ENCODE measurements at regions of chr19 and their contacts with region 1.

Region 1: GRCh38 chr19:49272184-49272583 is 52.8 kb downstream of the SLC6A16 start:
- DNase-seq: no peak
- ATAC-seq: no peak
- H3K4me3 ChIP-seq: no peak overlapping the region
- H3K27ac ChIP-seq: no peak overlapping the region
- H3K4me1 ChIP-seq: no peaks in the 10 kb centered on the region; a peak in 2 of 5 replicates
- H3K27me3 ChIP-seq: peaks cover 0 to 11% of the 10 kb centered on the region in 2 experiments; a peak in 2 of 5 replicates
- CTCF ChIP-seq: no peak
- EP300 ChIP-seq: no peak
- POLR2A ChIP-seq: no peak
- RAD21 ChIP-seq: no peak

Region 2: GRCh38 chr19:49301165-49301865 is 29.1 kb after region 1 on chr19:
- CTCF ChIA-PET with region 1: no interaction called
- POLR2A ChIA-PET with region 1: no interaction called
- in situ Hi-C with region 1: no loop called
- intact Hi-C with region 1: loop called (anchors 5 kb)
- DNase-seq: peak; percentile 87 to 89 (median 88)
- ATAC-seq: peak; percentile 100
- H3K4me3 ChIP-seq: peak overlapping the region; percentile 30
- H3K27ac ChIP-seq: no peak overlapping the region; the same call in 2 of the 3 replicates
- H3K4me1 ChIP-seq: peaks cover 2 to 5% of the 10 kb centered on the region in 2 experiments; a peak in 1 of 5 replicates
- H3K27me3 ChIP-seq: peaks cover 3 to 4% of the 10 kb centered on the region in 2 experiments; a peak in 2 of 5 replicates
- CTCF ChIP-seq: peak; percentile 92 to 97 (median 93)
- EP300 ChIP-seq: no peak
- POLR2A ChIP-seq: 0 out of 2 replicates have a peak, but pooled peaks have one; percentile 28
- RAD21 ChIP-seq: peak in 1 of 2 experiments; percentile 70; a peak in 3 of 4 replicates